ENCODE measurements at regions of chr14 and their contacts with region 1.

Region 1: DNA sequence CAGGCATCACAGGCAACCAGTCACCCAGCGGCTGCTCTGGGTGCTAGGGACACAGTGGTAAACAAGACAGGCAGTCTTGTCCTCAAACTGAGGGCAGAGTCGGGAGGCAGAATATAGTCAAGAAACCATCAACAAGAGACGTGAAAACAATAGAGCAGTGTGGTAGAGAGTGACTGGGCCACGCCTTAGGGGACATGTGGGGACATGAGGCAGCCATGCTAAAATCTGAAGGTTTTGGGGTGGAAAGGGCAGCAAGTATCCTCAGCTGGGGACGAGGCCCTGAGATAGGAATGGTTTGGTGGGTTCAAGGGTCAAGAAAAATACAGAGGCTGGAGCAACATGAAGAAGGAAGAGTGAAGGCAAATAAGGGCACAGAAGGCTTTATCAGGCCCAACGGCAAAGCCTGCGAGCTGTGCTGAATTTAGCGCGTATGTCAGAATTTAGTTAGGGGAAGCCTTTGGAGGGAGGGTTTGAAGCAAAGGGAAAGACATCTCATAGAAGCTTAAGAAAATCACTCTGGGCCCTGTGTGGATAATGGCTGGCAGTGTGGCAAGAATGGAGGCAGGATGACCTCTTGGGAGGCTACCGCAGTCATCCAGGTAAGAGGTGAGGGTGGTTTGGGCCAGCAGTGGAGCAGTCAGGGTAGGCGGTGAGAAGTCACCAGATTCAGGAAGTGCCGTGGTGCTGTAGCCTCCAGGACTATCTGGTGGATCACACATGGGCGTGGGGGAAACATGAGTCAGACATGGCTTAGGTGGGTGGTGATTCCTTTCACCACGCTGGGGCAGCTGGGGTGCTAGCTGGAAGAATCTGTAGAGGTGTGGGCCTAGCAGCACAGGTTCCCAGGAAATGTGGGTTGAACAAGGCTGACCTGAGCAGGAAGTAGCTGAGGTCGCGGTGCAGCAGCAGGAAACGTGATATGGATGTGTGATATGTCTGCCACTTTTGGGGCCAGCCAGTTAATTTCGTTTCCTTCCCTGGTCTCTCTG is 3.0 kb downstream of the EVL start:
- DNase-seq: peak; percentile 82
- H3K4me3 Mint-ChIP-seq: peak overlapping the region; percentile 88
- H3K27ac Mint-ChIP-seq: peak overlapping the region; percentile 99
- H3K4me1 Mint-ChIP-seq: peaks cover 84% of the 10 kb centered on the region
- H3K27me3 Mint-ChIP-seq: no peaks in the 10 kb centered on the region

Region 2: DNA sequence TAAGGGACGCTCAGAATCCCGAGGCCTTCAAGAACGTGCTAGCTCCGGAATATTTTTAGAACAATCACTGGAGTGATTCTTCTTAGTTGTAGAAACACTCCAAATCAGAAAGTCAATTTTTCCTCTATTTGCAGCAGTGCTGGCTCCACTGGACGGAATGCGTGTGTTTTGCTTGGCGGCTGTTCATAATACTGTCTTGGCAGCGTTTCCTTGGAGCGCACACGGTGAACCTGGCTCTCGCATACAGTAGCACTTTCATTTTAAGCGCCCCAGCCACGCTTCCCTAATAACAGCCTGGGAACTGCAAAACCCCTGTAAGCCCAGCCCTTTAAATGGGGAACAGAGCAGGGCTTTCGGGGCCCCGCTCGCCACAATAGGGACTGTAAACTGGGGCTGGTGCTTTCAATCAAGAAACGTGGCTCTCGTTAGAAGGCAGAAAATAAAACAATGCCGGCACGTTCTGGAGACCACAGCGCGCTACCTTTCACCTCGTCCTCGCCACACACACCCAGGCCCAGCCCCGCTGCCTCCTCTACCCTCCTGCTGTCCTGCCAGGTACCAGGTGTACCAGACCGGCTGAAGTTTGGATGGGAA is 876.1 kb before region 1 on chr14:
- intact Hi-C with region 1: loop called (anchors 5 kb)
- DNase-seq: no peak
- H3K4me3 Mint-ChIP-seq: peak overlapping the region; percentile 90
- H3K27ac Mint-ChIP-seq: peak overlapping the region; percentile 99
- H3K4me1 Mint-ChIP-seq: peaks cover 93% of the 10 kb centered on the region
- H3K27me3 Mint-ChIP-seq: no peaks in the 10 kb centered on the region

Region 3: GRCh38 chr14:99604283-99604765 is 463.9 kb before region 1 on chr14:
- intact Hi-C with region 1: loop called (anchors 2 kb)
- DNase-seq: peak; percentile 96
- H3K4me3 Mint-ChIP-seq: peak overlapping the region; percentile 88
- H3K27ac Mint-ChIP-seq: peak overlapping the region; percentile 88
- H3K4me1 Mint-ChIP-seq: peaks cover 24% of the 10 kb centered on the region
- H3K27me3 Mint-ChIP-seq: peaks cover 12% of the 10 kb centered on the region

Region 4: DNA sequence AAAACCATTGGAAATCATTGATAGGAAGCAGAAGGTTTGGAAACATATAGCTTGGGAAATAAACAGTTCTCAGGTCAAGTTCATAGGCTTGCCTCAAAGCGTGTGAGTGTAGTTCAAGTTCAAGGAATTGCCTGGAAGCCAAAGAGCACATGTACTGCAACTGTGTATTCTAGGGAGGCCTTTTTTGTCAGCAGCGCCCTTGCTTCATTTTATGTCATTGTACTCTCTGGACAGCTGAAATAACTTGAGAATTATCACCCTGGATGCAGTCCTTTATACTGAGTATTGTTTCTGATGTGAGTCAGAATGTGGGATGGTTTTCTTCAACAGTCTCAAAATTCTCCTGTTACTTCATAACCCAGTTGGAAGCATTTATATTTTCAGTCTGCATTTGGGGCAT is 19.0 kb before region 1 on chr14:
- intact Hi-C with region 1: loop called (anchors 1 kb)
- DNase-seq: no peak
- H3K4me3 Mint-ChIP-seq: peak overlapping the region; percentile 0
- H3K27ac Mint-ChIP-seq: peak overlapping the region; percentile 69
- H3K4me1 Mint-ChIP-seq: peaks cover 39% of the 10 kb centered on the region
- H3K27me3 Mint-ChIP-seq: no peaks in the 10 kb centered on the region

Region 5: DNA sequence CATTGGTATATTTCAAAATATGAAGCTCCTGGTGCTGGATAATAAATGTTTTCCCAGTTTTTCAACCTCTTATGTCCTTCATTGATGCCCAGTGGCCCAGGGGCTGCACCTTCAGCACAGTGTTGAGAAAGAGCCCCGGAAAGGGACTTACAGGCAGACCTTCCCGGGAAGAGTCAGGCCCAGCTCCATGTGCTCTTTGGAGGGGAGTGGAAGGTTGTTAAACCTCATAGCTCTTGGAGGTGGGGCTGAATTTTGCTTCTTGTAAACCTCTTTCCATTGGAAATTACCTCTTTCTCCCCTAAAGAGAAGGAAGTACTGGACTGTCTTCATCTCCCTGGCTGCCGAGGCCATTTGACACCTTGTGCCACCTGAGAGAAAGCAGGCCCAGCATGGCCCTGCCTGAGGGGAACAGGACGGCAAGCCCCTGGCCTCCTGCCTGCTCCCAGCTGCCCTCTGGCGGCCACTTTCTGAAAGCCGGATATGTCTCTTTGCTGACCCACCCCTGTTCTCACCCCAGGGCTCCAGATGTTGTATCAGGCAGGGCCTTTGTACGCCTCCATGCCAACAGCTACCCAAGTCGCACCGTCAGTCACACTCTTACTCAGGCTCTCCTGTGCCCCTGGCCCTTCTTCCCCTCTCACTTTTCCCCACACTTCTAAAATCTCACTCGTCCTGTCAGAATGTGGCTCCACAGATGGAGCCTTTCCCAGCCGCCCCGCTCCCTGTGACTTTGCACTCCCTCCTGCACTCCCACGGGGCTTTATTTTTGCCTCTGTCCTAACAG is 40.0 kb after region 1 on chr14:
- intact Hi-C with region 1: loop called (anchors 1 kb)
- DNase-seq: peak; percentile 74
- H3K4me3 Mint-ChIP-seq: peak overlapping the region; percentile 47
- H3K27ac Mint-ChIP-seq: peak overlapping the region; percentile 93
- H3K4me1 Mint-ChIP-seq: peaks cover 76% of the 10 kb centered on the region
- H3K27me3 Mint-ChIP-seq: no peaks in the 10 kb centered on the region

Region 6: GRCh38 chr14:100375963-100376735 is 307.9 kb after region 1 on chr14:
- intact Hi-C with region 1: loop called (anchors 2 kb)
- DNase-seq: peak; percentile 94
- H3K4me3 Mint-ChIP-seq: peak within 1 kb of the TSS; percentile 97
- H3K27ac Mint-ChIP-seq: peak within 1 kb of the TSS; percentile 96
- H3K4me1 Mint-ChIP-seq: peaks cover 53% of the 10 kb centered on the region
- H3K27me3 Mint-ChIP-seq: peaks cover 2% of the 10 kb centered on the region

Measured in activated T-helper 1 cell treated with anti-CD3 and anti-CD28 coated beads, Interleukin-12 subunit alpha, Interleukin-12 subunit beta, Interleukin-2, Interleukin-4 antibody, amounts not matched to agents 30 ng/mL and 10 ng/mL and 1 ng/mL, durations not matched to agents 14 hours and 24 hours and 36 hours (primary cell).